SK-N-SH (cell line): ENCODE measurements at regions of chrX and their contacts with region 1.

Region 1: GRCh38 chrX:130079824-130080406 is 30.4 kb downstream of the ELF4 start:
- DNase-seq: peak; percentile 75
- H3K4me3 ChIP-seq: no peak overlapping the region
- H3K27ac ChIP-seq: no peak overlapping the region
- H3K4me1 ChIP-seq: peaks cover 0 to 17% of the 10 kb centered on the region in 2 experiments; a peak in 1 of 4 replicates
- H3K27me3 ChIP-seq: peaks cover 17% of the 10 kb centered on the region; the same call in 1 of the 2 replicates
- CTCF ChIP-seq: peak; percentile 91
- EP300 ChIP-seq: no peak
- RAD21 ChIP-seq: peak; percentile 92

Region 2: GRCh38 chrX:130060122-130061069 is 19.5 kb before region 1 on chrX:
- CTCF ChIA-PET with region 1: interaction called, 34 read pairs
- POLR2A ChIA-PET with region 1: no interaction called
- DNase-seq: peak; percentile 98
- H3K4me3 ChIP-seq: peak overlapping the region; percentile 46 to 60
- H3K27ac ChIP-seq: no peak overlapping the region
- H3K4me1 ChIP-seq: peaks cover 0 to 4% of the 10 kb centered on the region in 2 experiments; a peak in 1 of 4 replicates
- H3K27me3 ChIP-seq: no peaks in the 10 kb centered on the region; the same call in 1 of the 2 replicates
- CTCF ChIP-seq: peak; percentile 88
- EP300 ChIP-seq: no peak
- RAD21 ChIP-seq: peak; percentile 79

Region 3: DNA sequence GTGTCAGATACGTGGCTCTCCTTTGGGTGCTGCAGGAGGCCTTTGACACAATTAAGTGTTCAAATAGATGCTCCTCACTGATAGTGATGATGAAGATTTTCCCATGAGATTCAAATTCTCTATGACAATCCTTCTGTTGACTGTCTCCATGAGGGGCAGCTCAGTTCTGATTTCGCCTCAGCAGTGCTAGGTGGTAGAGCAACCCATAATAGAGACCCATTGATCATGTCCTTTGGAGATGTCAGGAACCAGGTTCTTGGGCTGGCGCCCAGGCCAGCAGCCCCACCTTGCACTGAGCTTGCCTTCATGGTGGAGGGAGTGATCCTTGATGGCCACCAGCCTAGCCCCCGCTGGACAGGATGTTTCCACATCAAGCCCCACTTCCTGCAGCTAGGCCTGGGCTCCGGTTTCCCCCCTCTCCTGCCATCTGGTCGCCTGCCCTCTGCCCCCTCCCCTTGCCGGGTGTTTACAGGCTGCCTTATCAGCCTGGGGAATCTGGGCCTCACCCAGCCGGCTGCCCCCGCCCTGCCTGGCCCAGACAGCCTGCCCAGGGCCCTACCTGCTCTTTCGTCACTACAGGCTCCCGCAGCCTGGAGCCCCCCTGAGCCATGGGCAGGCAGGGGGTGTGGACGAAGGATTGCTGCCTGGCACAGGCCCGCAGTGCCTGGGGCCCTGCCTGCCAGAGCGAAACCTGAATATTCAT is 17.7 kb after region 1 on chrX:
- CTCF ChIA-PET with region 1: interaction called, 19 read pairs
- POLR2A ChIA-PET with region 1: no interaction called
- DNase-seq: peak; percentile 88
- H3K4me3 ChIP-seq: no peak overlapping the region
- H3K27ac ChIP-seq: peak overlapping the region in 1 of 2 experiments; percentile 73; a peak in 2 of 4 replicates
- H3K4me1 ChIP-seq: peaks cover 0 to 13% of the 10 kb centered on the region in 2 experiments; a peak in 1 of 4 replicates
- H3K27me3 ChIP-seq: no peaks in the 10 kb centered on the region; the same call in 1 of the 2 replicates
- CTCF ChIP-seq: no peak
- EP300 ChIP-seq: peak in 1 of 2 experiments; percentile 56; a peak in 1 of 4 replicates
- RAD21 ChIP-seq: no peak

Region 4: DNA sequence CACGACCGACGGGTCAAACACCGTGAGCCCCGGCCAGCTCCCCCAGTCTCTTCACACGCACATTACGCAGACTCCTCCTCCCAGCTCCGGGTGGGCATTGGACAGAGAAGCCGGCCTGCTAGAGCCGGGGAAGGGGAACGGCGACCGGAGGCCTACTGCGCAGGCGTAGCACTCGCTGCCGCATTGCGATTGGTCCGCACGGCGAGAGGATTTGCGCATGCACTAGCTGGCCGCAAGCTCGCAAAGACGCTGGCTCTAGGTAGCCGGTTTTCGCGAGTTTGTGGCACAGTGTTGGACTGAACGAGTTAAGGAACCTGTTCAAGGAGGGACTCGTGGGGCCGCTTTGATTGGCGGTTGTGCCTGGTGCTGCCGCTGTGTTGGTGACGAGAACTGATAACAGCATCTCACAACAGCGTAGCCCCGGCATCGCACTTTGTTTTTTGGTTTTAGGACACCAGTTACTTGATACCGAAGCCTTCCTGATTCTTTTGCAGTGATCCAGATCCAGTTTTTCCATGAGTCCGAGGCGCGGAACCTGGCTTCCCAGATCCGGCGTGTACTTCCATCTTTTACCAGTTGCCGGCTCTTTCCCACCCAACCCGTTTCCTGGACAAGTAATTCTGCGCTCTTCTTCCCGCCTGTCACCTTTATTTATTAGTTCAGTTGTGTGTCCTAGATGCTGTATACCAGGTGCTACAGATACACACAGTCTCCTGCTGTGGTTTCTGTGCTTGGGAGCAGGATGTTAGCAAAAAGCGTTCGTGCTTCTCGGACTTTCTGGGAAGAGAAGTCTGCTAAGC is 86.0 kb after region 1 on chrX and contains the start of gene AIFM1:
- CTCF ChIA-PET with region 1: interaction called, 21 read pairs
- POLR2A ChIA-PET with region 1: no interaction called
- DNase-seq: peak; percentile 93
- H3K4me3 ChIP-seq: peak within 1 kb of the TSS; percentile 83 to 91
- H3K27ac ChIP-seq: peak within 1 kb of the TSS; percentile 89 to 94
- H3K4me1 ChIP-seq: peaks cover 0 to 12% of the 10 kb centered on the region in 2 experiments; a peak in 2 of 4 replicates
- H3K27me3 ChIP-seq: no peaks in the 10 kb centered on the region
- CTCF ChIP-seq: no peak
- EP300 ChIP-seq: no peak; a peak in 1 of 4 replicates
- RAD21 ChIP-seq: 0 out of 2 replicates have a peak, but pooled peaks have one; percentile 19
- polyA plus RNA-seq, gene AIFM1: 49.8 and 61.4 TPM in 2 replicates

Region 5: DNA sequence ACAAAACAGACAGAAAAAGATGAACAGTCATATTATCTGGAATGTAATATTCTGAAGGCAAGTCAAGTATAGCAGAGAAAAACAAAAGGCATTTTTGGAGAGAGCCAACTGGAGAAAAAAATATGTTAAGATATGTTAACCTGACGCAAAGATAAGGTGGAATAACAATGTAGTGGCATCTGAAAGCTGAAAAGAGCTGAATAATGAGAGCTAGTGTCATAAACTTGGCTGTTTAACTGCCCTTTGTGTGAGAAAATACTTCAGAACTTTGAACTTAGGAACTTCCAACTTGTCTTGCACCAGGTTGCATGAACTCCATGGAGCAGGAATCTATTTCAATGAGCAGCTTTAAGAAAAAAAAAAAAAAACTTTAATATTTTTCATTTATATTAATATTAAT is 124.7 kb after region 1 on chrX:
- CTCF ChIA-PET with region 1: interaction called, 12 read pairs
- POLR2A ChIA-PET with region 1: no interaction called
- DNase-seq: no peak
- H3K4me3 ChIP-seq: no peak overlapping the region
- H3K27ac ChIP-seq: no peak overlapping the region
- H3K4me1 ChIP-seq: no peaks in the 10 kb centered on the region
- H3K27me3 ChIP-seq: peaks cover 10% of the 10 kb centered on the region; the same call in 1 of the 2 replicates
- CTCF ChIP-seq: no peak
- EP300 ChIP-seq: no peak
- RAD21 ChIP-seq: no peak